ENCODE measurements at regions of chr3 and their contacts with region 1.

Region 1: DNA sequence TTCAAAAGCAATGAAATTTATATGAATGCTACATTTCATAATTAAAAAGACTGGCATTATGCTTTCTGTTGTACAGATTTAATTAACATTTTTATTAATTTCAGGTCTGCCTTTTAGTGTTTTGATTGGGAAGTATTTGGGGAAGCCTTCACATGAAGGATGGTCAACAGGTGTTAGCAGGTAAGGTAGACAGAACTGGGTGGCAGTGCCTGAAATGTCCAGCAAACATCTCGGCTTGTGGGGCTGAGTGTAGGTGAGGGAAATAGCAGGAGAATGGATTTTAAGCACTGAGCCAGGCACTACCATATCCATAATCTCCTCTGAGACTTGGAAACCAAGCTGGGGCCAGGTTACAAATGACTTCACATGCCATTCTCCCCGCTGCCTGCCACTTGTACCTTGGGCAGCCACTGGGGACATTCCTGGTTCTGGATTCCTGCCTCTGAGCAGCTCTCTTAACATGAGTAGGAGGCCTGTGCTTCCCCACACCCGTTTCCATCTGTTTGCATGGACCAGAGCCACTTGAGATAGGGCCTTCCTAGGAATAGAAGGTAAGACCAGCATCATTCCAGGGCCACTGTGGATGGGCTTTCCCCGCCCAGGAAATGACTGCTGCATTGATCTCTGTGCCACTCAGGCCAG is 125.9 kb upstream of the HES1 start:
- DNase-seq: peak; percentile 34
- H3K4me3 Mint-ChIP-seq: no peak overlapping the region
- H3K27ac Mint-ChIP-seq: peak overlapping the region; percentile 15
- H3K4me1 Mint-ChIP-seq: peaks cover 48% of the 10 kb centered on the region
- H3K27me3 Mint-ChIP-seq: no peaks in the 10 kb centered on the region
- CTCF ChIP-seq: no peak

Region 2: GRCh38 chr3:193851941-193852674 is 157.9 kb before region 1 on chr3:
- CTCF ChIA-PET with region 1: interaction called, 4 read pairs
- intact Hi-C with region 1: loop called (anchors 5 kb)
- DNase-seq: peak; percentile 53
- H3K4me3 Mint-ChIP-seq: peak overlapping the region; percentile 3
- H3K27ac Mint-ChIP-seq: peak overlapping the region; percentile 85
- H3K4me1 Mint-ChIP-seq: peaks cover 64% of the 10 kb centered on the region
- H3K27me3 Mint-ChIP-seq: no peaks in the 10 kb centered on the region
- CTCF ChIP-seq: no peak

Region 3: GRCh38 chr3:194189243-194189791 is 179.3 kb after region 1 on chr3:
- CTCF ChIA-PET with region 1: no interaction called
- intact Hi-C with region 1: no loop called
- DNase-seq: no peak
- H3K4me3 Mint-ChIP-seq: no peak overlapping the region
- H3K27ac Mint-ChIP-seq: no peak overlapping the region
- H3K4me1 Mint-ChIP-seq: peaks cover 3% of the 10 kb centered on the region
- H3K27me3 Mint-ChIP-seq: no peaks in the 10 kb centered on the region
- CTCF ChIP-seq: no peak